ENCODE measurements at regions of chr3 and their contacts with region 1.

Region 1: DNA sequence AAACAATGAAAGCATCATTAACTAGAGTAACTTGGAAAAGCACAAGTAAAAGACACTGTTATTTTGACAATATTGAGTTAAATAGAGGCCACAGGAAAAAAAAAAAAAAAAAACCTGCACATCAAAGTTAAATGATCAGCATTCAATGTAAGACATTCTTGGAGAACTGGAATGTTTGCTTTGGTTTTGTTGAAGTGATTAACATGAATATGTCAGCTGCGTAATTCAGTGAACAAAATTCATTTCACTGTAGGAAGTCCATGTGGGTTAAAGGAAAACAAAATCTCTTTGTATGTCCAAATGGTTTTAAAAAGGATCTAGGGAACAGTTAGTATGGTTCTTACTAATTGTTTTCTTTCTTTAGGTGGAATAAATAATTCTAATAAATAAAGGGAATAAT is 252.8 kb upstream of the CNTN6 start:
- DNase-seq: no peak
- H3K4me3 ChIP-seq: no peak overlapping the region
- H3K27ac ChIP-seq: no peak overlapping the region
- H3K4me1 ChIP-seq: no peaks in the 10 kb centered on the region
- H3K27me3 ChIP-seq: no peaks in the 10 kb centered on the region
- CTCF ChIP-seq: no peak
- POLR2A ChIP-seq: no peak

Region 2: GRCh38 chr3:499001-499761 is 340.8 kb before region 1 on chr3:
- intact Hi-C with region 1: loop called (anchors 5 kb)
- DNase-seq: no peak
- H3K4me3 ChIP-seq: no peak overlapping the region
- H3K27ac ChIP-seq: no peak overlapping the region
- H3K4me1 ChIP-seq: no peaks in the 10 kb centered on the region
- H3K27me3 ChIP-seq: no peaks in the 10 kb centered on the region
- CTCF ChIP-seq: no peak
- POLR2A ChIP-seq: no peak

Region 3: DNA sequence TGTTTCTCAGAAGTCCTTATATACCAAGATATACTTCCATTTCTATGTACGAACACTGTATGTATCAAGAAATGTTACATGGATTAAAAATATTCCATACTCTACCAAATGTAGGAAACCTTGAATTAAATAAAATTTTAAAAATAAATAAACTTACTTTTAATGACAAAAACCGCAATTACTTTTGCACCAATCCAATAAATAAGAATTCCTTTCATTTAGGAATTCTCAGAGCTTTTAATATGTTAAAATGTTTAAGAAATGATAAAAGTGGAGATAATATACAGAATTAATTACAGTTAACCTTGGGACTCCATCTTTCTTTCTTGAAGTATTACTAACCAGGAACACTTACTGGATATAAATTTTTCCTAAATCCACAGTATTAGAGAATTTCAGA is 525.5 kb after region 1 on chr3:
- intact Hi-C with region 1: no loop called
- DNase-seq: no peak
- H3K4me3 ChIP-seq: no peak overlapping the region
- H3K27ac ChIP-seq: no peak overlapping the region
- H3K4me1 ChIP-seq: no peaks in the 10 kb centered on the region
- H3K27me3 ChIP-seq: no peaks in the 10 kb centered on the region
- CTCF ChIP-seq: no peak
- POLR2A ChIP-seq: no peak